ENCODE measurements at regions of chr20 and their contacts with region 1.

Region 1: GRCh38 chr20:3846740-3847428 is at the start of gene MAVS:
- DNase-seq: peak; percentile 89
- H3K4me3 Mint-ChIP-seq: peak within 1 kb of the TSS; percentile 91
- H3K27ac Mint-ChIP-seq: peak within 1 kb of the TSS; percentile 85
- H3K4me1 Mint-ChIP-seq: peaks cover 24% of the 10 kb centered on the region
- H3K27me3 Mint-ChIP-seq: no peaks in the 10 kb centered on the region
- total RNA-seq, gene MAVS: 22.2 to 24.2 TPM

Region 2: DNA sequence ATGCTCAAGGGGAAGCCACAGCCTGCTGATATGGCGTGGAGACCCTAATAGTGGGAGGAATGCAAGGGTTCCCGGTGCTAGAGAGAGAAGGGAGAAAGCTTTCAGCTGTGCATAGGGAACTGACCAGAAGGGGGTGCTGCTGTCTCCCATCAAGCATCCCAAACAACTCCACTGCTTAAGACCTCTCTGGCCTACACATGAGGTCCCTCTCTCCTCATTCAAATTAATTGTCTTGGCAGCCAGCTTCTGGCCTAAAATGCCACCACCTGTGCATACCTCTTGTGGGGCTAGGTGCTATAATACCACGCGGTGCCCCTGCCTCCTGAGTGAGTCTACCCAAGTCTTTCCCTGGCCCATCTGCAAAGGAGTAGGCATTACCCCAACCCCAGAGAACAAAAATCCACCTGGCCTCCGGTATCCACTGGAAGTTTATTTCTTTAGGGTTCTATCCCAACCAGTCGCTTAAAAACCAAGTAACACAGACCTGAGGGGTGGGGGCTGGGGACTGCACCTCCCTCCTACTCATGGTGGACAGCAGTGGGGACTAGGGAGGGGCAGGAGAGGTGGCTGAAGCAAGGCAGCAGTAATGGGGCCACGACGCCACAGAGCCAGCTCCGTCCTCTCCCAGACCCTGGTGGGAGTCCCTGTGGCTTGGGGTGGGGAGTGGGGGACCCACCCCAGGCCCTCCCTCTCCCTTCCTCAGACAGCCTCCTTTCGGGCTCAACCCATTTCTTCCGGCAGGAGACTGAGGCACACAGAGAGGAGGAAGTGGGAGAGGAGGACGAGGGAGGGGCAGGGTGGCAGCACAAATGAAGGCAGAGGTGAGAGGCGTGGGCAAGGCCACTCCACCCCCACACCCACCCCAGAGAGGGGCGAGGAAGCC is 93.5 kb before region 1 on chr20:
- CTCF ChIA-PET with region 1: interaction called, 3 read pairs
- POLR2A ChIA-PET with region 1: no interaction called
- intact Hi-C with region 1: loop called (anchors 1 kb)
- DNase-seq: peak; percentile 75
- H3K4me3 Mint-ChIP-seq: no peak overlapping the region
- H3K27ac Mint-ChIP-seq: peak overlapping the region; percentile 58
- H3K4me1 Mint-ChIP-seq: peaks cover 6% of the 10 kb centered on the region
- H3K27me3 Mint-ChIP-seq: no peaks in the 10 kb centered on the region

Measured in activated CD4-positive, alpha-beta memory T cell treated with anti-CD3 and anti-CD28 coated beads for 36 hours (primary cell).